GM10248 (cell line): ENCODE measurements at regions of chr22 and their contacts with region 1.

Region 1: GRCh38 chr22:38614332-38615063 is 41.7 kb downstream of the FAM227A start:
- DNase-seq: peak; percentile 26
- CTCF ChIP-seq: no peak

Region 2: GRCh38 chr22:38628444-38628843 is 13.9 kb after region 1 on chr22:
- CTCF ChIA-PET with region 1: interaction called, 12 read pairs
- POLR2A ChIA-PET with region 1: no interaction called
- DNase-seq: no peak
- CTCF ChIP-seq: no peak